PC-9 (cell line): ENCODE measurements at regions of chr12 and their contacts with region 1.

Region 1: GRCh38 chr12:116426391-116427136 is 132.6 kb upstream of the MAP1LC3B2 start:
- DNase-seq: peak; percentile 88 to 97
- H3K4me3 ChIP-seq: peak overlapping the region; percentile 42; the same call in 1 of the 2 replicates
- H3K27ac ChIP-seq: peak overlapping the region; percentile 91
- H3K4me1 ChIP-seq: peaks cover 52% of the 10 kb centered on the region
- H3K27me3 ChIP-seq: no peaks in the 10 kb centered on the region
- CTCF ChIP-seq: peak; percentile 52; the same call in 1 of the 2 replicates

Region 2: DNA sequence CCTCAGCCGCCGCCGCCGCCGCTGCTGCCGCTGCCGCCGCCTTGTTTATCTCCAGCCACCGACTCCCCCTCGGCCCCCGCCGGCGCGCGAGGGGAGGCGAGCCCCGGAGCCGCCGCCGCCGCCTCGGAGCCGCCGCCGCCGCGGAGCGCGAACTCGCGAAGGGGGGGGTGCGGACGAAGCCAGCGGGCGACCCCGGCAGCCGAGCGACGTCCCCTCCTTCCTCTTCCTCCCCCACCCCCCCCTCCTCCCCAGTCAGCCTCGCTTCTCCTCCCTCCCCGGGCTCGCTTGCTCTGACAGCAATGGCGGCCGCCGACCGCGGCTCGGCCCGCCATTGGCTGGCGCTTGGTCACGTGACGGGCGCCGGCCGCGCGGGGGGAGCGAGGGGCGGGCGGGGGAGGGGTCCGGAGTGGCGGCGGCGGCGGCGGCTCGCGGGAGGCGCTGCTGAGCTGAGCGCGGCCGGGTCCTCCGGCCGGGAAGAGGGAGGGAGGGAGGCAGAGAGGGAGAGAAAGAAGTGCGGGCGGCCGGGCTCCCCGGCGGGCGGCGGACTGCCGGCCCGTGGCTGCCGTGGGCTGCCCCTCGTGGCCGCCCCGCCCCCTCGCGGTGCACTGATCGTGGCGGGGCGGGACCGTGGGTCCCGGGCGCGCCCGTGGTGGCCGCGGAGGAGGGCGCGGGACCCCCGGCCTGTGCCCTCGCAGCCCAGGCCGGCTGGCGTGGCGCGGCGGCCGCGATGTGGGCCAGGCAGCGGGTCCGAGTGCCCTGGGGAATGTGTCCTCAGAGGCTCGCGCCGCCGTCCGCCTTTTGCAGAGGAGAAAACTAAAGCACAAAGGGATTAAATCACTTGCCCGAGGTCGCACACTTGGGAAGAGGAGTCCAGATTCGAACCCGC is 148.9 kb before region 1 on chr12 and contains the start of gene MED13L:
- CTCF ChIA-PET with region 1: no interaction called
- POLR2A ChIA-PET with region 1: interaction called, 3 read pairs
- intact Hi-C with region 1: loop called (anchors 1 kb)
- DNase-seq: peak; percentile 66 to 89
- H3K4me3 ChIP-seq: peak within 1 kb of the TSS; percentile 89
- H3K27ac ChIP-seq: peak within 1 kb of the TSS; percentile 59
- H3K4me1 ChIP-seq: peaks cover 38% of the 10 kb centered on the region
- H3K27me3 ChIP-seq: no peaks in the 10 kb centered on the region
- CTCF ChIP-seq: no peak
- total RNA-seq, gene MED13L: 89.5 and 101 TPM in 2 replicates

Region 3: GRCh38 chr12:116303929-116304328 is 122.6 kb before region 1 on chr12:
- CTCF ChIA-PET with region 1: no interaction called
- POLR2A ChIA-PET with region 1: no interaction called
- intact Hi-C with region 1: no loop called
- DNase-seq: no peak
- H3K4me3 ChIP-seq: no peak overlapping the region
- H3K27ac ChIP-seq: no peak overlapping the region
- H3K4me1 ChIP-seq: peaks cover 7% of the 10 kb centered on the region
- H3K27me3 ChIP-seq: no peaks in the 10 kb centered on the region
- CTCF ChIP-seq: no peak

Region 4: GRCh38 chr12:116389990-116390389 is 36.6 kb before region 1 on chr12:
- CTCF ChIA-PET with region 1: no interaction called
- POLR2A ChIA-PET with region 1: interaction called, 3 read pairs
- intact Hi-C with region 1: loop called (anchors 2 kb)
- DNase-seq: peak; percentile 63 to 95
- H3K4me3 ChIP-seq: no peak overlapping the region
- H3K27ac ChIP-seq: peak overlapping the region; percentile 78
- H3K4me1 ChIP-seq: peaks cover 36% of the 10 kb centered on the region
- H3K27me3 ChIP-seq: no peaks in the 10 kb centered on the region
- CTCF ChIP-seq: no peak

Region 5: DNA sequence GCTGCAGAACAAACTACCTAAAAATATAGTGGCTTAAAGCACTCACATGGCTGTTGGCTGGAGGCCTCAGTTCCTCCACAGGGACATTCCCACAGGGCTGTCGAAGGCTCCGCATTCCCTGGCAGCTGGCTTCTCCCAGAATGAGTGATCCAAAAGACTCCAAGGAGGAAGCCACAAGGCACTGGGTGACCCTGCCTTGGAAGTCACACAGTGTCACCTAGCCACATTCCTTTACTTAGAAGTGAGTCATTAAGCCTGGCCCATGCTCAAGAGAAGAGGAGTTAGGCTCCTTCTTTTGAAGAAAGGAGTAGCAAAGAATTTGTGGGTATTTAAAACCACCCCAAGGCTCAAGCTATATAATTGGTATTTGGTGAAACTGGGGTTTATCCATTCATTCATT is 68.7 kb after region 1 on chr12:
- CTCF ChIA-PET with region 1: no interaction called
- POLR2A ChIA-PET with region 1: no interaction called
- intact Hi-C with region 1: loop called (anchors 1 kb)
- DNase-seq: peak; percentile 78 to 99
- H3K4me3 ChIP-seq: no peak overlapping the region
- H3K27ac ChIP-seq: peak overlapping the region; percentile 95
- H3K4me1 ChIP-seq: peaks cover 61% of the 10 kb centered on the region
- H3K27me3 ChIP-seq: no peaks in the 10 kb centered on the region
- CTCF ChIP-seq: no peak

Region 6: GRCh38 chr12:116533343-116534251 is 107.0 kb after region 1 on chr12:
- CTCF ChIA-PET with region 1: no interaction called
- POLR2A ChIA-PET with region 1: no interaction called
- intact Hi-C with region 1: loop called (anchors 2 kb)
- DNase-seq: peak; percentile 51 to 76
- H3K4me3 ChIP-seq: peak overlapping the region; percentile 57
- H3K27ac ChIP-seq: no peak overlapping the region
- H3K4me1 ChIP-seq: peaks cover 18% of the 10 kb centered on the region
- H3K27me3 ChIP-seq: no peaks in the 10 kb centered on the region
- CTCF ChIP-seq: no peak

Region 7: DNA sequence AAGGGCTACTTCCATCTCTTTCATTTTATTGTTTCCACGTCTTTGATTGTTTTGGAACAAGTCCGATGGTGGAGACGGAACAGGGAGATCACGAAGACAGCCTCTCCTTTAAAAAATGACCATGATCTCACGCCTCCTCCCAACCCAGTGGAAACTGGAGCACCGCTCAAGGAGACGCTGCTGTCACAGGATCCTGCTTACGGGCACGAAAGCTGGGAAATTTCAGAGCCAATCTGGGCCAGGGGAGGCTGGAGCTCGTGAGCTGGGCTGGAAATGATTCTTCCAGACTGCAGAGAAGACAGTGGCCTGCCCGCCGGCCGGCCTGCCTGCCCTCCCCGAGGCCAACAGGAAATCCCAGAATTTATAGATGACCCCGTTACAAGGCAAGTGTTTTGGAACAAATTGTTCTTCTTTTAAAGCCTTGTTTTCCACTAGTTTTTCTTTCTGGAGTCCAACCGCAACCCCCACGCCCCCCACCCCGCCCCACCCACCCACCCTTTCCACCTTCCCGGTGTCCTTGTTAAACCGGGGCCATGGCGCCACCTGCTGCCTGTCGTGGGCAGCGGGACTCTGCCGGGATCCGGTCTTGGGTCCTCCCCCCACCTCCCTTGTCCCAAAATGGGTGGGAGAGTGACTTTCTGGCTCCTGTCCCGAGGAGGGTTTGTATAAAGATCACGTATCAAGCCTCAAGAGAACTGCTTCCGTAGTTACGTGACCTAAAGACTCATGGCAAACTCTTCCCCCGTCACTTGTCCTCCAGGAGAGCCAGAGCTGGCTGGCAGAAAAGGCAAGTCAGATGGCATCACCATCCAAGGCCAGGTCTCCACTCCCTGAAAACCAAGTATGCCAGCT is 172.9 kb after region 1 on chr12:
- CTCF ChIA-PET with region 1: no interaction called
- POLR2A ChIA-PET with region 1: no interaction called
- intact Hi-C with region 1: loop called (anchors 2 kb)
- DNase-seq: peak in 1 of 2 experiments; percentile 55
- H3K4me3 ChIP-seq: no peak overlapping the region
- H3K27ac ChIP-seq: no peak overlapping the region
- H3K4me1 ChIP-seq: peaks cover 10% of the 10 kb centered on the region
- H3K27me3 ChIP-seq: no peaks in the 10 kb centered on the region
- CTCF ChIP-seq: peak; percentile 42; the same call in 1 of the 2 replicates

Region 8: GRCh38 chr12:116945886-116946550 is 519.5 kb after region 1 on chr12:
- CTCF ChIA-PET with region 1: no interaction called
- POLR2A ChIA-PET with region 1: no interaction called
- intact Hi-C with region 1: no loop called
- DNase-seq: no peak
- H3K4me3 ChIP-seq: no peak overlapping the region
- H3K27ac ChIP-seq: no peak overlapping the region
- H3K4me1 ChIP-seq: no peaks in the 10 kb centered on the region
- H3K27me3 ChIP-seq: no peaks in the 10 kb centered on the region
- CTCF ChIP-seq: no peak